Calu3 (cell line): ENCODE measurements at regions of chr17 and their contacts with region 1.

Region 1: GRCh38 chr17:66386498-66387365 is 84.3 kb downstream of the PRKCA start:
- DNase-seq: peak; percentile 69
- H3K4me3 Mint-ChIP-seq: peak overlapping the region; percentile 59
- H3K27ac Mint-ChIP-seq: peak overlapping the region; percentile 98
- H3K4me1 Mint-ChIP-seq: peaks cover 63% of the 10 kb centered on the region
- H3K27me3 Mint-ChIP-seq: no peaks in the 10 kb centered on the region
- CTCF ChIP-seq: no peak

Region 2: DNA sequence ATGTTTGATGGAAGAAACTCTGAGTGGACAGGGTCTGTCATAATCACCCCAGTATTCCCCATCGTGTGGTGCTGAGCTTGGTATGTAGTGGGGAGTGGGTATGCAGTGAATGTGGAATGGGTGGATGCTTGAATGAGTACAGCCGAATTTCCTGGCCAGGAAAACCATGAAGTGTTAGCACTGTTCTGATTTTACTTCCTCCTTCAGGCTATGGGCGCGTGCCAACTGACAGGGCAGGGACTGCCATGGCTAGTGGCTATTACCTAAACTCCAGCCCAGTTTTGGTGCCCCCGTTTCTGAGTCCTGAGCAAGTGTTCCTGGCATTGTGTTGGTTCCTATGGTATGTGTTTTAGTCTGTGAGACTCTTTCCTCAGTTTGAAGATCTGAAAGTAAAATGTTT is 35.7 kb before region 1 on chr17:
- CTCF ChIA-PET with region 1: no interaction called
- intact Hi-C with region 1: loop called (anchors 5 kb)
- DNase-seq: peak; percentile 80
- H3K4me3 Mint-ChIP-seq: peak overlapping the region; percentile 49
- H3K27ac Mint-ChIP-seq: peak overlapping the region; percentile 87
- H3K4me1 Mint-ChIP-seq: peaks cover 81% of the 10 kb centered on the region
- H3K27me3 Mint-ChIP-seq: no peaks in the 10 kb centered on the region
- CTCF ChIP-seq: no peak

Region 3: GRCh38 chr17:66373944-66374817 is 12.6 kb before region 1 on chr17:
- CTCF ChIA-PET with region 1: interaction called, 7 read pairs
- intact Hi-C with region 1: loop called (anchors 1 kb)
- DNase-seq: peak; percentile 58
- H3K4me3 Mint-ChIP-seq: peak overlapping the region; percentile 73
- H3K27ac Mint-ChIP-seq: peak overlapping the region; percentile 81
- H3K4me1 Mint-ChIP-seq: peaks cover 54% of the 10 kb centered on the region
- H3K27me3 Mint-ChIP-seq: no peaks in the 10 kb centered on the region
- CTCF ChIP-seq: no peak

Region 4: DNA sequence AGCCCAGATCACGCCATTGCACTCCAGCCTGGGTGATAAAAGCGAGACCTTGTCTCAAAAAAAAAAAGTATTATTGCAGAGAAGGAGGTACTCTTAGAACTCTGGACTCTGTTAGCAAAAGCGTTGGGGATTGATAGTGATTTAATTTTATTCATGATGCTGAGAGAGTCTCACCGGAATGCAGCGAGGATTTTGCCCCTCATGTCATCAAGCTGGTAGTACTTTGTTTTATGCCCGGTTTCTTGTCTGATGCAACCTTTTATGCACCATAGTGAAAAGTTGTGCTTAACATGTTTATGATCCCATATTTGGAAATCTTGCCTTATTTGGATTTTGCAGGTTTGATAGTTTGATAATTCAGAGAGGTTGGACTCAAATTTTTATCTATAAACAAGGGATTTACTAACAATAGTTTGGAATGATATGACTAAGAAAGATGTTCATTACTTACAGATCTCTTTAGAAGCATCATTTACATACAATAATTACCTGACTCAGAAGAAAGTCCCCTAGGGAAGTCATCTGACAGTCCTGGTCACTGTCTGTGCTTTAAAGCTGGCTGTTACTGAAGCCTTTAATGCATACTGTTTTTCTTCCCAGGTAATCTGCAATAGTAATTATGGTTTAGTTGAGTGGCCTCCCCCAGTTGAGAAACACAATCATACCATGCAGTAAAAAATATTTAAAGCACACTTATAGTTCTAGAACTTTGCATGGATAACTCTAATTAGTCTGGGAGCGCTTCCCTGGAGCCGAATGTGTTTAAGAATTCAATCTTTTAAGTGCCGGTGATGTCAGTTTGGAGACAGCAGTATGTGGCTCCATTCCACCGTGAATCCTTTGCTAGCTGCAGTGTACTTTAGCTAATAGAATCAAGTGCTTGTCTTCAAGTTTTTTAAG is 36.6 kb after region 1 on chr17:
- CTCF ChIA-PET with region 1: no interaction called
- intact Hi-C with region 1: loop called (anchors 2 kb)
- DNase-seq: no peak
- H3K4me3 Mint-ChIP-seq: no peak overlapping the region
- H3K27ac Mint-ChIP-seq: peak overlapping the region; percentile 61
- H3K4me1 Mint-ChIP-seq: peaks cover 68% of the 10 kb centered on the region
- H3K27me3 Mint-ChIP-seq: no peaks in the 10 kb centered on the region
- CTCF ChIP-seq: no peak

Region 5: GRCh38 chr17:66474258-66474657 is 87.5 kb after region 1 on chr17:
- CTCF ChIA-PET with region 1: no interaction called
- intact Hi-C with region 1: no loop called
- DNase-seq: no peak
- H3K4me3 Mint-ChIP-seq: no peak overlapping the region
- H3K27ac Mint-ChIP-seq: no peak overlapping the region
- H3K4me1 Mint-ChIP-seq: peaks cover 46% of the 10 kb centered on the region
- H3K27me3 Mint-ChIP-seq: no peaks in the 10 kb centered on the region
- CTCF ChIP-seq: no peak